Dorsolateral prefrontal cortex (tissue), 120 donors: ENCODE measurements at regions of chr16 and their contacts with region 1.

Region 1: DNA sequence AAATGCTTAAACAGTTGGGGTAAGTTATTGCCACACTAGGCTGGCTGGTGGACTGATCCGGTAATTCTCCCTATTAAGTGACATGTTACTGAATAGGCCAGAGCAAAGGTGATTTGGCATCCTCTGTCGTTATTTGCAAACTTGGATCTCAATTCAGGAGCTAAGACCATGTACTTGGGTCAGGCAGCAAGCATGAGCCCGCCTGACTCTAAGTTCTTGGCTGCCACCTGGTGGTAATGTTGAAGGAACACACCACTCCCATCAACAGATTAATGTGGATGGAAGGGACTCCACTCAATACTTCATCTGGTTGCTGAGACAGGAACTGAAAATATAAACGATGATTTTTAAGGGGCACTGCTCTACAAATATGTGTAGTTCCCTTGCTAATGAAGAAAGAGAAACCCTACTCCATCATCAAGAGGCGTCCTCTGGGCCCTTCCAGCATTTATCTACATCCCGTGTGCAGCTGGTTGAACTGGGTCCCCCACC is 70.8 kb downstream of the EMP2 start:
- DNase-seq: peak in 9 of 10 donors; percentile 56 to 77 (median 62)
- H3K4me3 ChIP-seq: no peak overlapping the region
- H3K27ac ChIP-seq: no peak overlapping the region
- H3K27me3 ChIP-seq: peaks cover 0 to 7% (median 0%) of the 10 kb centered on the region in 45 donors
- CTCF ChIP-seq: peak; percentile 78 to 94 (median 86)

Region 2: DNA sequence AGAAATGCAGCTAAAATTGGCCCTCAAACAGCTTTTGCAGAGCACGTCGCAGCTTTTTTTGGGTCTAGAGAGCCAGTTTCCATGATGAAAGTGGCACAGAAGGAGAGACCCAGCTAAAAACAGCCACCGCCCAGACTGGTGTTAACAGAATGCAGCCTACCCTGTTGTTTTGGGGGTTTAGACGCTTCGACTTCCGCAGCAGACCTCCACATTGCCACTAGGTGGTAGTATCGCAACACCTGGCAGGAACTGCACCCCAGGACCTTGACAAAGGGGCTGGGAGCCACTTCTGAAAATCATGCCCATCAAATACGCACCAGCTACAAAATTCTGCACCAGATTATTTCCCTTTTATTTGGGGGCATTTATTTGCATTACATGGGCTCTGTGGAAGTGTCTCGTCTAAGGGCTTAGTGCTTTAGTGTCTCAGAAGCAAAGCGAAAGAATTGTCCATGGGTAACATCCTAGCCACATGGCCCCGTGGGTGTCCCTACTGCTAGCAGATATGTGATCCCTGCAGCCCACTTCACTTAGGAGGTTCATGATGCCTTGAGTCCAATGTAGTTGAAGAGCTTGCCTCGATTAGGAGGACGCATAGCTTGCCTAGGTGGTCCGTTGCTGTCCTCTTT is 1251.0 kb before region 1 on chr16:
- intact Hi-C with region 1: loop called in 1 of 2 experiments (anchors 5 kb)
- DNase-seq: peak; percentile 41 to 79 (median 70)
- H3K4me3 ChIP-seq: no peak overlapping the region
- H3K27ac ChIP-seq: peak overlapping the region in 45 of 59 donors; percentile 4 to 85 (median 59)
- H3K27me3 ChIP-seq: no peaks in the 10 kb centered on the region
- CTCF ChIP-seq: peak; percentile 58 to 89 (median 78)

Region 3: GRCh38 chr16:10256784-10257641 is 252.6 kb before region 1 on chr16:
- intact Hi-C with region 1: loop called (anchors 1 to 5 kb)
- DNase-seq: peak in 2 of 10 donors; percentile 10 to 11
- H3K4me3 ChIP-seq: peak overlapping the region in 1 of 59 donors; percentile 22
- H3K27ac ChIP-seq: no peak overlapping the region
- H3K27me3 ChIP-seq: peaks cover 0 to 1% (median 0%) of the 10 kb centered on the region in 45 donors
- CTCF ChIP-seq: peak in 55 of 56 donors; percentile 26 to 80 (median 66)

Region 4: DNA sequence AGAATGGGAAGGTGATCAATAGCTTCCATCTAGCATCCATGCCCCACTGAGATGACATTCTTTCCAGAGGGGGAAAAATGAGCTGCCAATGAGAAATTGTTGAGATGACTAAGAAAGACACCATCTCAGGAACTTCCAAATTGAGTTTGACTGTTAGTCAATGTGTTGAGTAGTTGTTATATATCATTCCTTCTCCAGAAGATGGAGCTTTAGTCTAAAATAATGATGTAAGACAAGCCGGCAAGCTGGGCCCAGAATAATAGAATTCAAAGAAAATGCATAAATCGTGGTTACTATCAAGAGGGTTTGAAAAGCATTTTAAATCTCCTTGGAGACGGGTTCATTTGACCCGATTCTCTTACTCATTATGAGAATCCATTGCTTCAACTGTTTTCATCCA is 194.8 kb before region 1 on chr16:
- intact Hi-C with region 1: loop called (anchors 2 to 10 kb)
- DNase-seq: no peak
- H3K4me3 ChIP-seq: no peak overlapping the region
- H3K27ac ChIP-seq: no peak overlapping the region
- H3K27me3 ChIP-seq: no peaks in the 10 kb centered on the region
- CTCF ChIP-seq: peak in 45 of 56 donors; percentile 10 to 65 (median 34)

Region 5: GRCh38 chr16:10694830-10695229 is 185.2 kb after region 1 on chr16 and contains the start of gene TEKT5:
- intact Hi-C with region 1: no loop called
- DNase-seq: no peak
- H3K4me3 ChIP-seq: no peak within 1 kb of the TSS
- H3K27ac ChIP-seq: no peak within 1 kb of the TSS
- H3K27me3 ChIP-seq: no peaks in the 10 kb centered on the region
- CTCF ChIP-seq: no peak
- total RNA-seq, gene TEKT5: 0.27 to 4.1 (median 1.2) TPM in 106 of 120 experiments, not detected in the others